ENCODE measurements at regions of chr11 and their contacts with region 1.

Region 1: DNA sequence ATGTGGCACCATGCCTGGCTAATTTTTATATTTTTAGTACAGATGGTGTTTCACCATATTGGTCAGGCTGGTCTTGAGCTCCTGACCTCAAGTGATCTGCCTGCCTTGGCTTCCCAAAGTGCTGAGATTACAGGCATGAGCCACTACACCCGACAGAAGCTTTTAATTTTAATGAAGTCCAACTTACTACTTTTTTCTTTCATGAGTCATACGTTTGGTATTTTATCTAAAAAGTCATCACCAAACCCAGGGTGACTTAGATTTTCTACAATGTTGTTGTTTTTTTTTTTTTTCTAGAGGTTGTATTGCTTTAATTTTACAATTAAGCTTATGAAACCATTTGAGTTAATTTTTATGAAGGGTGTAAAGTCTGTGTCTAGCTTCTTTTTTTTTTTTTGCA is 34.9 kb downstream of the JRKL start:
- DNase-seq: no peak
- ATAC-seq: no peak
- H3K4me3 ChIP-seq: no peak overlapping the region
- H3K4me3 Mint-ChIP-seq: no peak overlapping the region
- H3K27ac ChIP-seq: no peak overlapping the region
- H3K27ac Mint-ChIP-seq: no peak overlapping the region
- H3K4me1 ChIP-seq: no peaks in the 10 kb centered on the region
- H3K4me1 Mint-ChIP-seq: no peaks in the 10 kb centered on the region
- H3K27me3 ChIP-seq: peaks cover 0 to 12% (median 0%) of the 10 kb centered on the region in 4 experiments
- H3K27me3 Mint-ChIP-seq: peaks cover 23% of the 10 kb centered on the region
- CTCF ChIP-seq: no peak

Region 2: DNA sequence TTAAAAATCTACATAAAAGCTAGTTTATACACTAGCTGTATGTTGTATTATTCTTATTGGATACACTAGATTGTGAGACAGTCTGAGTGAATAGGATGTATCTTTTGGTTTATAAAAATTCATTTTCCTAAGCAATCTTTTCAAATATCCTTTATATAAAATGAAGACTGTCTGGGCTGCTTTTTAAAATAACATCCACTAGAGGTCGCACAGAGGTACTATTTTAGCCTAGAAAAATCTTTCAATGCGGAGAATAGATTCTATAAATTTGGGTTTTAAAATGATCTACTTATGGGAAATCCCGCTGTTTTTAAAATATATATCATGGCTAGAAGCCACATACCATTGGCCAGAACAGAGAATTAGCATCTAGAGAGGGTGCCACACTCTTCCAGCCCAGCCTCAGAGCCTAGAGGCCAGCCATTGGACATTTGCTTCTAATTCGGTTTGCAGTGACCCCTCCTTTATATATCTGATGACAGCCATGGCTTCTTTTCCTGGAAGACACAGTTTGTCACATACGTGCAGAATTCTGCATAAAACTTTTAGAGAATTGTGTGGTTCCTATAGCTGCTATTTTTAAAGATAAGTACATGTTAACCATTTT is 1905.1 kb before region 1 on chr11:
- CTCF ChIA-PET with region 1: interaction called, 8 read pairs
- POLR2A ChIA-PET with region 1: no interaction called
- intact Hi-C with region 1: loop called (anchors 1 kb)
- DNase-seq: peak; percentile 48
- ATAC-seq: no peak
- H3K4me3 ChIP-seq: no peak overlapping the region
- H3K4me3 Mint-ChIP-seq: no peak overlapping the region
- H3K27ac ChIP-seq: no peak overlapping the region
- H3K27ac Mint-ChIP-seq: no peak overlapping the region
- H3K4me1 ChIP-seq: no peaks in the 10 kb centered on the region
- H3K4me1 Mint-ChIP-seq: no peaks in the 10 kb centered on the region
- H3K27me3 ChIP-seq: peaks cover 0 to 4% (median 2%) of the 10 kb centered on the region in 4 experiments
- H3K27me3 Mint-ChIP-seq: peaks cover 27% of the 10 kb centered on the region
- CTCF ChIP-seq: peak; percentile 83

Region 3: DNA sequence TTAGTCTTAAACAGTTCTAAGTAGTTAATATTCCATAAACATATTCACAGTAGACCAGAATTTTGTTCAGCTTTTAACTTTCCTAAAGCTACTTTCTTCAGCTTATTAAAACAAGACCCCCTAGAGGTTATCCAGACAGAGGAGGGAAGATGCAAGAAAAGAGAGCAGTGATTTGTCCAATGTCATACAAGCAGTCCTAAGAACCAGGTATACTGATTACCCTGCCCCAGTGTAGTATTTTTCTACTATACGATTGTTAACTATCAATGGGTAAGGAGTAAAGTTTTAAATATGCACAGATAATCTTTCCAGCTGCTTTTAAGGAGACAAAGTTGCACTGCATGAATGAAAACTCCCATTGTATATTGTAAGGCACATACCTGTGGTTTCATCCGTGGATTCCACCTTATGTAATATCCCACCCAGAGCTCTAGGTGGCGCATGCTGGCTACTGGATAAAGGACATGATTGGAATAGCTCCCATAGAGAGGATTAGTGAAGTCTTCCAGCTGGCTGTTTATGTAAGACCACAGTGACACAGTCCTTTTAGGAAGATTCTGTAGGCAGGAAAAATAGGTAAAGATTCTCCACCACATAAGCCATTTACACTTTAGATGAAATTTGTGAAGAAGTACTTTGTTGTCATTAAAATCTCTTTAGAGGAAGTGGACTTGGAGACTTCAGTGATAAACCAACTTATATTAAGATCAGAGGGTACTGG is 588.8 kb before region 1 on chr11:
- CTCF ChIA-PET with region 1: interaction called, 37 read pairs
- POLR2A ChIA-PET with region 1: no interaction called
- intact Hi-C with region 1: loop called (anchors 1 kb)
- DNase-seq: peak; percentile 67
- ATAC-seq: peak; percentile 90
- H3K4me3 ChIP-seq: no peak overlapping the region
- H3K4me3 Mint-ChIP-seq: no peak overlapping the region
- H3K27ac ChIP-seq: no peak overlapping the region
- H3K27ac Mint-ChIP-seq: no peak overlapping the region
- H3K4me1 ChIP-seq: no peaks in the 10 kb centered on the region
- H3K4me1 Mint-ChIP-seq: no peaks in the 10 kb centered on the region
- H3K27me3 ChIP-seq: no peaks in the 10 kb centered on the region
- H3K27me3 Mint-ChIP-seq: no peaks in the 10 kb centered on the region
- CTCF ChIP-seq: peak; percentile 92

Region 4: DNA sequence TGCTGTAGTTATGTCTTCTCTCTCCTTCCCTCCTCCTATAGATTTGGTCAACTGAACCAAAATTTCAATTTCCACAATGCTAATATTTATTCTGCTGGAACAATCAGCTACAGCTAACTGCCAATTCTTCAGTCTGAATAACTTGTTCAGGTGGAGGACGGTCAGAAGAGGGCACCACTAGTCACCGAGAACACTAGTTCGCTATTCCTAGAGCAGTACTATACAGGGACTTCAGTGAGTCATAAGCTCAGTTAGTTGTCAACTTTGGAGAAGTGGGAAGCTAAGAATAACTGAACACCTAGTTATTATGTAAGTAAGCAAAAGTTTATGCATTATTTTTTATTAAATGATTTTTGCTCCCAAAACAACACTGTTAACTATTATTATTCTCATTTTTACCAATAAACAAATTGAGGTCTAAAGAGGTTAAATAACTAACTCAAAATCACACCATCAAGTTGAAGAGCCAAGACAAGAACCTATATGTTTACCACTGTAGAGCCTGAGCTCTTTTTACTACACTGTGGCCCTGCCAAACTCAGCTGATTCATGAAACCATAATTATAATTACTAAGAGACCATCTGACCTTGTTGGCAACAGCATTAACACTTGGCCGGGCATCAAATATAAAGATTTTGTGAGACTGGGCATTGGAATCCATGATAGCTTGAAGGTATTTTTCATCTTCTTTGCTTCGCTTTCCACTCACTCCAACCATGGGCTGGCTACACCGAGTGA is 575.4 kb before region 1 on chr11:
- CTCF ChIA-PET with region 1: interaction called, 13 read pairs
- POLR2A ChIA-PET with region 1: no interaction called
- intact Hi-C with region 1: no loop called
- DNase-seq: peak; percentile 29
- ATAC-seq: no peak
- H3K4me3 ChIP-seq: no peak overlapping the region
- H3K4me3 Mint-ChIP-seq: no peak overlapping the region
- H3K27ac ChIP-seq: no peak overlapping the region
- H3K27ac Mint-ChIP-seq: peak overlapping the region; percentile 21
- H3K4me1 ChIP-seq: no peaks in the 10 kb centered on the region
- H3K4me1 Mint-ChIP-seq: no peaks in the 10 kb centered on the region
- H3K27me3 ChIP-seq: no peaks in the 10 kb centered on the region
- H3K27me3 Mint-ChIP-seq: no peaks in the 10 kb centered on the region
- CTCF ChIP-seq: no peak

Region 5: GRCh38 chr11:96472085-96472484 is 47.4 kb after region 1 on chr11:
- CTCF ChIA-PET with region 1: no interaction called
- POLR2A ChIA-PET with region 1: no interaction called
- intact Hi-C with region 1: no loop called
- DNase-seq: no peak
- ATAC-seq: no peak
- H3K4me3 ChIP-seq: no peak overlapping the region
- H3K4me3 Mint-ChIP-seq: no peak overlapping the region
- H3K27ac ChIP-seq: no peak overlapping the region
- H3K27ac Mint-ChIP-seq: no peak overlapping the region
- H3K4me1 ChIP-seq: no peaks in the 10 kb centered on the region
- H3K4me1 Mint-ChIP-seq: no peaks in the 10 kb centered on the region
- H3K27me3 ChIP-seq: peaks cover 0 to 26% (median 0%) of the 10 kb centered on the region in 4 experiments
- H3K27me3 Mint-ChIP-seq: peaks cover 11% of the 10 kb centered on the region
- CTCF ChIP-seq: no peak

Region 6: GRCh38 chr11:96567176-96567575 is 142.5 kb after region 1 on chr11:
- CTCF ChIA-PET with region 1: no interaction called
- POLR2A ChIA-PET with region 1: no interaction called
- intact Hi-C with region 1: no loop called
- DNase-seq: no peak
- ATAC-seq: no peak
- H3K4me3 ChIP-seq: no peak overlapping the region
- H3K4me3 Mint-ChIP-seq: no peak overlapping the region
- H3K27ac ChIP-seq: no peak overlapping the region
- H3K27ac Mint-ChIP-seq: no peak overlapping the region
- H3K4me1 ChIP-seq: no peaks in the 10 kb centered on the region
- H3K4me1 Mint-ChIP-seq: no peaks in the 10 kb centered on the region
- H3K27me3 ChIP-seq: no peaks in the 10 kb centered on the region
- H3K27me3 Mint-ChIP-seq: no peaks in the 10 kb centered on the region
- CTCF ChIP-seq: no peak

Measured in B cell (primary cell).